Right cardiac atrium (tissue), 5 donors: ENCODE measurements at regions of chr12 and their contacts with region 1.

Region 1: DNA sequence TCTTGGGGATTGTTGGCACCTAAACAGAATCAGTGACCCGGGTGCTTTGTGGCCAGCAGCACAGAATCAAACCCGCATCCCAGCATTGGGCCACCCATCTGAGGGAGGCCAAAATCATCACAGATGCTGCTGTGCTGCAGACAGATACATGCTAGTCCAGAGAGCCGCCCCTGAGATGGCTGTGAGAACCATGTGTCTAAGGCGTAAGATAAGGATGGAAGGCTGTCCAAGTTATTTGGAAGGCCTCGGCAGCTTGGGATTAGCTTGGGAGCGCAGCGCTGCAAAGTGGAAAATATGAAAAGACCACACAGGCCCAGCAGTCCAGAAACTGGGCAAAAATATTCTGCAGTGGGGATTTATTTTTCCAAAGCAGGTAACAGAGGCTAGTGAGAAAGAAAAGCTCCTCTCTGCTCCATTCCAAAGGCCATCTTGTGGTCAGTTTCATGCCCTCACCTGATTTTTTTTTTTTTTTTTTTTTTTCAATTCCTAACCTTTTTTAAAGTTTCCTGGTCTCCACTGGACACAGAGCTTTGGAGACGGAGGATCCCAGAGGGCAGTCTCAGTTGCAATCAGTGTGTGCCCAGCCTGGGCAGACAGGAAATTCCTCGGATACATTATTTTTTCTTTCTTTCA is 178.9 kb upstream of the BCL2L14 start:
- DNase-seq: peak; percentile 56 to 86 (median 77)
- ATAC-seq: peak; percentile 91 to 95
- H3K4me3 ChIP-seq: no peak overlapping the region
- H3K27ac ChIP-seq: peak overlapping the region; percentile 15
- H3K4me1 ChIP-seq: no peaks in the 10 kb centered on the region
- H3K27me3 ChIP-seq: no peaks in the 10 kb centered on the region

Region 2: DNA sequence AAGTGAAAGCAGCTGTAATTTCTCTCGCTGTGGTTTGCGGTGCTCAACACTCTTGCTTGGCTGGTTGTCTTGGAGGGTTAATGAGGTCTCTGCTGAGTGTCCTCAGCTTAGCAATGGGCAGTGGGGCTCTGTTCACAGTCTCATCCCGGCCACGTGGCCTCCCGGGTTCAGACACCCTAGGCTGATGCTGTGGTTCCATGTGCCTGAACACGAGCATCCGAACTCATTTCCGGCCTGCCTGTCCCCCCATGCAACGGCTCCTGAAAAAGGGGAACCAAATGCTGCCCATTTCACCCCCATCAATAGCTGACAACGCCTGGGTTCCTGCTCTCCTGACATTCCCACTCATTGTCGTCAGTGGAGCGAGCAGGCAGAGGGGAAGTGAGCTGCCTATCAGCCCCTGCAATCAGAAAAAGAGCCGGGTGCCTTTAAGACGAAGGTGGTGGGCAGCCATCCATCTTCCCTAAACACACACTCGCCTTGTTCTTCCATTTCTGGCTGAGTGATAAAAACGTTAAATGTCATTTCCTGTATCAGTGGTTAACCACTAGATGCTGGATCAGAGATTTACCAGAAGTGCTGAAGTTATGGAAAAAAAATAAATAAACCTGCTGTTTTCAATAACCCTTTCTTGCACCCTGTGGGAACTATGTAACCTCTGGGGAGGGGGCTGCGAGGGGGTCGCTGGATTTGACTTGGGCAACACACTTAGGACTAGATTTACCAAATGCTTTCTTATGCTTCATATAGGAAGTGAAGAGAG is 118.6 kb after region 1 on chr12:
- intact Hi-C with region 1: loop called in 1 of 4 experiments (anchors 10 kb)
- DNase-seq: peak; percentile 61 to 78 (median 70)
- ATAC-seq: peak; percentile 67 to 80
- H3K4me3 ChIP-seq: no peak overlapping the region
- H3K27ac ChIP-seq: no peak overlapping the region
- H3K4me1 ChIP-seq: peaks cover 3% of the 10 kb centered on the region
- H3K27me3 ChIP-seq: no peaks in the 10 kb centered on the region

Region 3: GRCh38 chr12:12606781-12607589 is 715.1 kb after region 1 on chr12:
- intact Hi-C with region 1: loop called in 1 of 4 experiments (anchors 10 kb)
- DNase-seq: no peak
- ATAC-seq: no peak
- H3K4me3 ChIP-seq: no peak overlapping the region
- H3K27ac ChIP-seq: no peak overlapping the region
- H3K4me1 ChIP-seq: no peaks in the 10 kb centered on the region
- H3K27me3 ChIP-seq: no peaks in the 10 kb centered on the region